H1 (cell line): ENCODE measurements at regions of chr9 and their contacts with region 1.

Region 1: GRCh38 chr9:98074115-98074990 is 17.8 kb downstream of the NANS start:
- DNase-seq: peak in 1 of 2 experiments; percentile 94
- H3K4me3 ChIP-seq: no peak overlapping the region
- H3K27ac ChIP-seq: no peak overlapping the region
- H3K4me1 ChIP-seq: peaks cover 0 to 11% (median 6%) of the 10 kb centered on the region in 4 experiments; a peak in 4 of 7 replicates
- H3K27me3 ChIP-seq: no peaks in the 10 kb centered on the region
- CTCF ChIP-seq: peak; percentile 68 to 92 (median 86)
- EP300 ChIP-seq: no peak
- POLR2A ChIP-seq: no peak
- RAD21 ChIP-seq: peak; percentile 94 to 95

Region 2: GRCh38 chr9:97710356-97711222 is 363.8 kb before region 1 on chr9:
- CTCF ChIA-PET with region 1: no interaction called
- POLR2A ChIA-PET with region 1: no interaction called
- DNase-seq: peak in 1 of 2 experiments; percentile 58
- H3K4me3 ChIP-seq: peak overlapping the region in 2 of 4 experiments; percentile 17 to 33; a peak in 1 of 8 replicates
- H3K27ac ChIP-seq: no peak overlapping the region
- H3K4me1 ChIP-seq: peaks cover 0 to 9% (median 1%) of the 10 kb centered on the region in 4 experiments; a peak in 3 of 7 replicates
- H3K27me3 ChIP-seq: 0 out of 7 replicates have a peak, but pooled peaks cover 0 to 1% (median 0%) of the 10 kb centered on the region in 4 experiments
- CTCF ChIP-seq: peak; percentile 39 to 80 (median 74)
- EP300 ChIP-seq: no peak
- POLR2A ChIP-seq: no peak
- RAD21 ChIP-seq: peak; percentile 88 to 93

Region 3: DNA sequence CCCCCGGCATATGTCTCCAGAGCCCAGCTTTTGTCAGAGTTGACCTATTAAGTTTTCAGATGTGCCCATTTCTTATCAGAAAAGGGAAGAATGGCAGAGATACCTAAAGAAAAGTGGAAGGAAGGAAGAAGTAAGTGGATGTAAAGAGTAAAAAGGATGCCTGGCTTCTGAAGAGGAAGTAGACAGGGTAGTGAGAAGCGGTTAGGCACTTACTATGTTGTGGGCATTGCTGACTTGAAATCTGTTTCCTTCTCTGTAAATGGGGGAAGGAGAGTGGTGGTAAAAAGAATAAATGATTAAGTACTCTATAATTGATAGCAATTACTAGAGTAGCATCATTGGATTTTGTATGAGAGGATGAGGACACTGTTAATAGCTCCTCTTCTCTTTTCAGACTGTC is 81.4 kb before region 1 on chr9:
- CTCF ChIA-PET with region 1: no interaction called
- POLR2A ChIA-PET with region 1: no interaction called
- DNase-seq: no peak
- H3K4me3 ChIP-seq: no peak overlapping the region
- H3K27ac ChIP-seq: no peak overlapping the region
- H3K4me1 ChIP-seq: no peaks in the 10 kb centered on the region
- H3K27me3 ChIP-seq: no peaks in the 10 kb centered on the region; a peak in 2 of 7 replicates
- CTCF ChIP-seq: no peak
- EP300 ChIP-seq: no peak
- POLR2A ChIP-seq: no peak
- RAD21 ChIP-seq: no peak

Region 4: DNA sequence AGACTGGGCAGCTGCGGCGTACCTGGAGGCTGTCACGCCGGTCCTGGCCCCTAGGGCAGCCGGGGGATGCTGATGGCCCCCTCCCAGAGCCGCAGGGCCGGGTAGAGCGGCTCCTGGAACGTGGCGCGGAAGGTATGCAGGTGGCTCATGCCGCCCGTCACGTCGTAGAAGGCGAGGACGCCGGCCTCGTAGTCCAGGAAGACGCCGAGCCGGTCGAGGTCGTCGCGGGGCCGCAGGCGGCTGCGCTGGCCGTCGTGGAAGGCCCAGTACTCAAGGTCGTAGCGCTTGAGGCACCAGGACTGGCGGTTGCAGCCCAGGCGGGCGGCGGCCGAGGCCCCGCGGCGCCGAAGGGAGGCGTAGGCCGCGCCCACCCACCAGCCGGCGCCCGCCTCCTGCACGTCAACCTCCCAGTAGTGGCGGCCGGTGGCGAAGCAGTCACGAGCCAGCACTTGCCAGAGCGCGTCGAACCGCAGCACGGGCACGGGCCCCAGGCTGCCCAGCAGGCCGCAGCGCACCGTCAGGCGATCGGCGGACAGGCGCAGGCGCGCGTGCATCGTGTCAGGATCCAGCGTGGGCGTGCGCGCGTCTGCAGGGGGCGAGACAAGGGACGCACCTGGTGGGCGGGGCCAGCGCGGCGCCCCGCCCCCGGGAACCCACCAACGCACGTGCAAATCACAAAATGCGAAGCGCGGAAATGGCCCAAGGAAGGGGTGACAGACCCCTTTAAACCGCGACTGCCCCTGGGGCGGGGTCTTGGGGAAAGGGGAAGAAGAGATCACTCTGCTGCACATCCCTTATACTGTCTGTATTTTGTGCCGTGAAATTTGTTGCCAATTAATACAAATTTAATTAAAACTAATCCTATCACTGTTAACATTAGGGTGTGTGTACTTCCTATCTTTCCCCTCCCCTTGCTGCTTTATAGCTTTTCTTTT is 13.3 kb after region 1 on chr9:
- CTCF ChIA-PET with region 1: interaction called, 29 read pairs
- POLR2A ChIA-PET with region 1: interaction called, 6 read pairs
- DNase-seq: peak; percentile 36 to 75
- H3K4me3 ChIP-seq: peak overlapping the region; percentile 18 to 51 (median 32); a peak in 6 of 8 replicates
- H3K27ac ChIP-seq: no peak overlapping the region
- H3K4me1 ChIP-seq: peaks cover 5 to 26% (median 11%) of the 10 kb centered on the region in 4 experiments; a peak in 6 of 7 replicates
- H3K27me3 ChIP-seq: no peaks in the 10 kb centered on the region; a peak in 2 of 7 replicates
- CTCF ChIP-seq: peak; percentile 16 to 40 (median 25); a peak in 2 of 4 replicates
- EP300 ChIP-seq: no peak
- POLR2A ChIP-seq: peak in 1 of 2 experiments; percentile 45; a peak in 2 of 3 replicates
- RAD21 ChIP-seq: peak in 1 of 2 experiments; percentile 18; a peak in 1 of 4 replicates

Region 5: GRCh38 chr9:98118640-98119601 is 44.6 kb after region 1 on chr9 and contains the start of gene TRIM14:
- CTCF ChIA-PET with region 1: interaction called, 15 read pairs
- POLR2A ChIA-PET with region 1: no interaction called
- DNase-seq: peak; percentile 53 to 80
- H3K4me3 ChIP-seq: peak within 1 kb of the TSS; percentile 40 to 63 (median 54)
- H3K27ac ChIP-seq: no peak within 1 kb of the TSS
- H3K4me1 ChIP-seq: peaks cover 0 to 8% (median 3%) of the 10 kb centered on the region in 4 experiments; a peak in 4 of 7 replicates
- H3K27me3 ChIP-seq: no peaks in the 10 kb centered on the region; a peak in 1 of 7 replicates
- CTCF ChIP-seq: peak in 1 of 3 experiments; percentile 15; a peak in 1 of 4 replicates
- EP300 ChIP-seq: no peak
- POLR2A ChIP-seq: no peak
- RAD21 ChIP-seq: peak in 1 of 2 experiments; percentile 32; a peak in 2 of 4 replicates
- total RNA-seq, gene TRIM14: 18.7 and 19.4 TPM in 2 replicates

Region 6: DNA sequence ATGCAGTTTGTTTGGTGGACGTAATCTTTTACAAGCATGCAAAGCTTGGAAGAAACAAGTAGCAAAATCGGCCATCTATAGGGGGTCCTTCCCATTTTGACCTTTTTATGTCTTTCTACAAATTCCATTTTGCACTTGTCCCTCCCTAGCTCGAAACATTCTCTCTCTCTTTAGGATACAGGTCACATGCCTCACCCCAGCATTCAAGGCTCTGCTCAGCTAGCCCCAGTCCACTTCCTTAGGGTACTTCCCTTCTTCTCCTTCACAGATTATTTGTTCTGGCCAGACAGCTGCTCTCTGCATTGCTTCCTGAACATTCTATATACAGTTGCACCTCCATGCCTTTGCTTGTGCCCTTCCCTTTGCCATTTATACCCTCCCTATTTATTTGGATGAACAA is 76.4 kb after region 1 on chr9:
- CTCF ChIA-PET with region 1: no interaction called
- POLR2A ChIA-PET with region 1: no interaction called
- DNase-seq: no peak
- H3K4me3 ChIP-seq: no peak overlapping the region
- H3K27ac ChIP-seq: no peak overlapping the region
- H3K4me1 ChIP-seq: peaks cover 0 to 3% (median 0%) of the 10 kb centered on the region in 4 experiments; a peak in 2 of 7 replicates
- H3K27me3 ChIP-seq: no peaks in the 10 kb centered on the region
- CTCF ChIP-seq: no peak
- EP300 ChIP-seq: no peak
- POLR2A ChIP-seq: no peak
- RAD21 ChIP-seq: no peak

Region 7: GRCh38 chr9:98215821-98216220 is 141.5 kb after region 1 on chr9:
- CTCF ChIA-PET with region 1: interaction called, 10 read pairs
- POLR2A ChIA-PET with region 1: no interaction called
- DNase-seq: peak in 1 of 2 experiments; percentile 74
- H3K4me3 ChIP-seq: no peak overlapping the region
- H3K27ac ChIP-seq: no peak overlapping the region
- H3K4me1 ChIP-seq: peaks cover 7 to 25% (median 15%) of the 10 kb centered on the region in 4 experiments
- H3K27me3 ChIP-seq: no peaks in the 10 kb centered on the region
- CTCF ChIP-seq: peak; percentile 75 to 94 (median 87)
- EP300 ChIP-seq: no peak
- POLR2A ChIP-seq: no peak
- RAD21 ChIP-seq: peak; percentile 66 to 73